ENCODE measurements at regions of chr16 and their contacts with region 1.

Region 1: GRCh38 chr16:85821441-85822135 is 22.1 kb downstream of the COX4I1 start:
- DNase-seq: peak; percentile 55 to 87 (median 72)
- ATAC-seq: peak; percentile 89
- H3K4me3 ChIP-seq: no peak overlapping the region
- H3K4me3 Mint-ChIP-seq: no peak overlapping the region
- H3K27ac ChIP-seq: no peak overlapping the region
- H3K27ac Mint-ChIP-seq: no peak overlapping the region
- H3K4me1 ChIP-seq: peaks cover 12% of the 10 kb centered on the region
- H3K4me1 Mint-ChIP-seq: peaks cover 15% of the 10 kb centered on the region
- H3K27me3 ChIP-seq: no peaks in the 10 kb centered on the region
- H3K27me3 Mint-ChIP-seq: no peaks in the 10 kb centered on the region
- CTCF ChIP-seq: peak; percentile 94

Region 2: GRCh38 chr16:85767569-85767968 is 54.0 kb before region 1 on chr16:
- CTCF ChIA-PET with region 1: no interaction called
- POLR2A ChIA-PET with region 1: no interaction called
- intact Hi-C with region 1: no loop called
- DNase-seq: no peak
- ATAC-seq: no peak
- H3K4me3 ChIP-seq: no peak overlapping the region
- H3K4me3 Mint-ChIP-seq: no peak overlapping the region
- H3K27ac ChIP-seq: no peak overlapping the region
- H3K27ac Mint-ChIP-seq: no peak overlapping the region
- H3K4me1 ChIP-seq: no peaks in the 10 kb centered on the region
- H3K4me1 Mint-ChIP-seq: no peaks in the 10 kb centered on the region
- H3K27me3 ChIP-seq: no peaks in the 10 kb centered on the region
- H3K27me3 Mint-ChIP-seq: no peaks in the 10 kb centered on the region
- CTCF ChIP-seq: no peak

Region 3: GRCh38 chr16:85799497-85800337 is 21.9 kb before region 1 on chr16 and contains the starts of genes COX4I1 and EMC8:
- CTCF ChIA-PET with region 1: interaction called, 13 read pairs
- POLR2A ChIA-PET with region 1: no interaction called
- intact Hi-C with region 1: no loop called
- DNase-seq: peak; percentile 85 to 96 (median 90)
- ATAC-seq: peak; percentile 79
- H3K4me3 ChIP-seq: peak within 1 kb of the TSS; percentile 84
- H3K4me3 Mint-ChIP-seq: peak within 1 kb of the TSS; percentile 97
- H3K27ac ChIP-seq: peak within 1 kb of the TSS; percentile 61 to 95
- H3K27ac Mint-ChIP-seq: peak within 1 kb of the TSS; percentile 99
- H3K4me1 ChIP-seq: peaks cover 40% of the 10 kb centered on the region
- H3K4me1 Mint-ChIP-seq: peaks cover 78% of the 10 kb centered on the region
- H3K27me3 ChIP-seq: no peaks in the 10 kb centered on the region
- H3K27me3 Mint-ChIP-seq: no peaks in the 10 kb centered on the region
- CTCF ChIP-seq: no peak
- total RNA-seq, gene COX4I1: 749 to 750 TPM
- total RNA-seq, gene EMC8: 38.9 to 41.7 TPM

Region 4: DNA sequence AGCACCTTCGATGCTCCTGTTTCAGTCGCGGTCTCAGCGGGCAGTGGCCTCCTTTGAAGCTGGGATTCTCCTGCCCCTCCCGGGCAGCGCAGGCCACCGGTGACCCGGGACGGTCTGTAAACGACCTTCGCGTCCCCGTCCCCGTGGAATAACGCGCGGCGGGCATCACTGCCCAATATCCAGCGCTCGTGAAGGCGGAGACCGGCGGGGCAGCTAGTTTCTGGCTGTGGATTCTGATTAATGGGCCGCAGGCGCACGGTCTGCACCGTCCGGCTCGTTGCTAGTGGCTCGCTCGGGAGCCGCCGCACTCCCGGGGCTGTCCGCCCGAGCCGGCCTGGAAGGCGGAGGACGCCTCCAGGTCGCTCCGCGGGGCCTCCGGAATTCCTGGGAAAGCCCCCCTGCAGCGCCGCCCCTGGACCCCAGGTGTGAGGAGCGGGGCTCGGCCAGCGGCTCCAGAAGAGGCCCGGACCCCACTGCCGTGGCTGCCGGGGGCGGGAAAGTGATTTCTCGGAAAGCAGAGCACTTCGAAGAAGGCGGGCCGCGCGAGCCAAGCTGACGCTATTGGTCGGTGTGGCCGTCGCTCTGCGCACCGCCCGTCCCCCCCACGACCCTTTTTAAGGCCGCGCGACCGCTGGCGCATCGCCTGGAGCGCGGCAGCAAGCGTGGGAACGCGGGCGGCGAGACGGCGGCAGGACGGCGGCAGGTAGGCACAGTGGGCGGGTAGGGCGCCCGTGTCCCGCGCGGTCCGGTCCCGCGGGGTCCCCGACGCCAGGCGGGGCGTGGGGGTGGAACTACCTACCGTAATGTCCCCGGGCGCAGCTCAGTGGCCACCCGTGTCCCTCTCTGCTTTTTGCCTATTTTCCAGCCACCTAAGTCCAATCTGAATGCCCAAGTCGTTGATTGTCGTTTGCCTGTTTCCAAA is 77.2 kb after region 1 on chr16 and contains the start of gene IRF8:
- CTCF ChIA-PET with region 1: interaction called, 4 read pairs
- POLR2A ChIA-PET with region 1: no interaction called
- intact Hi-C with region 1: loop called (anchors 5 to 10 kb)
- DNase-seq: peak; percentile 33 to 86 (median 60)
- ATAC-seq: peak; percentile 78
- H3K4me3 ChIP-seq: peak within 1 kb of the TSS; percentile 65
- H3K4me3 Mint-ChIP-seq: peak within 1 kb of the TSS; percentile 91
- H3K27ac ChIP-seq: no peak within 1 kb of the TSS
- H3K27ac Mint-ChIP-seq: no peak within 1 kb of the TSS
- H3K4me1 ChIP-seq: peaks cover 43% of the 10 kb centered on the region
- H3K4me1 Mint-ChIP-seq: peaks cover 45% of the 10 kb centered on the region
- H3K27me3 ChIP-seq: peaks cover 0 to 13% of the 10 kb centered on the region in 2 experiments
- H3K27me3 Mint-ChIP-seq: peaks cover 31% of the 10 kb centered on the region
- CTCF ChIP-seq: no peak
- total RNA-seq, gene IRF8: 11.3 to 13.2 TPM

Region 5: GRCh38 chr16:85986931-85987749 is 165.6 kb after region 1 on chr16:
- CTCF ChIA-PET with region 1: interaction called, 53 read pairs
- POLR2A ChIA-PET with region 1: interaction called, 8 read pairs
- intact Hi-C with region 1: loop called (anchors 1 kb)
- DNase-seq: peak in 13 of 14 experiments; percentile 18 to 66 (median 30)
- ATAC-seq: no peak
- H3K4me3 ChIP-seq: no peak overlapping the region
- H3K4me3 Mint-ChIP-seq: no peak overlapping the region
- H3K27ac ChIP-seq: no peak overlapping the region
- H3K27ac Mint-ChIP-seq: no peak overlapping the region
- H3K4me1 ChIP-seq: peaks cover 24% of the 10 kb centered on the region
- H3K4me1 Mint-ChIP-seq: peaks cover 12% of the 10 kb centered on the region
- H3K27me3 ChIP-seq: peaks cover 0 to 2% of the 10 kb centered on the region in 2 experiments
- H3K27me3 Mint-ChIP-seq: peaks cover 22% of the 10 kb centered on the region
- CTCF ChIP-seq: peak; percentile 78

Region 6: DNA sequence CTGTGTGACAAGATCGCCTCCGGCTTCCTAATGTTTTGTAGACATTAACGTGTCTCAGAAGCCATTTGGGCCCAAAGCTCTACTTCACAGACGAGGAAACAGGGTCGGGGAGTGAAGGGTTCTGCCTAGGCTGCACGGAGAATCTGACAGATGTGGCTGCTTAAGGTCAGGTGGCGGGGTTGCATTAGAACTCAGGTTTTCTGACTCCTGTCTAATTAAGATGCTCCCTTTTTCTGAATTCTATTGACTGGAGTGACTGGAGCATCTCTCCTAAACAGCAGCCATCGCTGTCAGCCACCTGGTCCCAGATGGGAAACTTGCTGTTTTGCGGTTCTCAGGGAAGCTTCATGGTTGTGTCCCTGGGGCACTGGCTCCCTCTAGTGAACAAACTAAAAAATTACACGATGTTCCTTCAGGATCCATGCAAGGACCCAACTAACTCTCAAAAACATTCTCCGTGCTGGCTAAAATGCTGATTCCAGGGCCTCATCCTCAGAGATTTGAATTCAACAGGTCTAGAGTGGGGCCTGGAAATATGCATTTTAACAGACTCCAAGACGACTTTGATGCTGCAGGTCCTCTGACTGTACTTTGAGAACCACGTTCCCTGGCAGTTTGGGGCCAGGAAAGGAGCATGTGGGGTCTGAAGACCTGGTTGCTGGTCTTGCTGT is 194.7 kb after region 1 on chr16:
- CTCF ChIA-PET with region 1: interaction called, 43 read pairs
- POLR2A ChIA-PET with region 1: interaction called, 8 read pairs
- intact Hi-C with region 1: loop called (anchors 1 kb)
- DNase-seq: peak in 10 of 14 experiments; percentile 5 to 74 (median 15)
- ATAC-seq: no peak
- H3K4me3 ChIP-seq: no peak overlapping the region
- H3K4me3 Mint-ChIP-seq: no peak overlapping the region
- H3K27ac ChIP-seq: no peak overlapping the region
- H3K27ac Mint-ChIP-seq: no peak overlapping the region
- H3K4me1 ChIP-seq: peaks cover 4% of the 10 kb centered on the region
- H3K4me1 Mint-ChIP-seq: no peaks in the 10 kb centered on the region
- H3K27me3 ChIP-seq: peaks cover 5 to 20% of the 10 kb centered on the region in 2 experiments
- H3K27me3 Mint-ChIP-seq: peaks cover 47% of the 10 kb centered on the region
- CTCF ChIP-seq: peak; percentile 86

Region 7: DNA sequence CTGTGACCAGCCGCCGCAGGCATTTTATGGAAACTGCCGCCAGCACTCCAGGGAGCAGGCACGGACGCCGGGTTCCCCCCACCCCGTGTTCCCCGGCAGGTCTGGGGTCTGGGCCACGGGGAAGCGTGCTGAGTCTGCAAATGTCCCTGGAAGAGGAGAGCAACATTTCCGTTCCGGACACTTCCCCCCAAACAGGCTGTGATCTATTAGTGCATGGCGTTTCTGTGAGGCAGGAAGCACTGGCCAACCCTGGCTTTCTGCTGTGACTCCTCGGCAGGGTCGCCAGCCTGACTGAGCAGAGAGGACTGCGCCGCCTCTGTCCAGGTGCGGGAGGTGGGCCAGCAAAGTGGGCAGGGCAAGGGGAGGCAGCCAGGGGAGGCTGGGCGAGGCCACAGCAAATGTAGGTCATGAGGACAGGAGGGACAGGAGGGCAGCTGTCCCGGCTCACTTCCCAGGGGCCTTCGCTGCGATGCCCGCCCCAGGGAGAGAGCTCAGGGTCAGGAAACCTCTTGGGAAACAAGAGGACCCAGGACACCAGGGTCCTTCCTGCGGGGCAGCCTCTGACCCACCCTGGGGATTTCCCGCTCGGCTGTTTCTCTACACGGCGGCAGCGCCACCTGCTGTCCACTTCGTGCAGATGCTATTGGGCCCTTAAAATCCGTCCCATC is 698.2 kb after region 1 on chr16:
- CTCF ChIA-PET with region 1: no interaction called
- POLR2A ChIA-PET with region 1: no interaction called
- intact Hi-C with region 1: loop called (anchors 1 to 10 kb)
- DNase-seq: peak; percentile 22 to 79 (median 38)
- ATAC-seq: peak; percentile 59
- H3K4me3 ChIP-seq: peak overlapping the region; percentile 27
- H3K4me3 Mint-ChIP-seq: no peak overlapping the region
- H3K27ac ChIP-seq: no peak overlapping the region
- H3K27ac Mint-ChIP-seq: no peak overlapping the region
- H3K4me1 ChIP-seq: peaks cover 13% of the 10 kb centered on the region
- H3K4me1 Mint-ChIP-seq: peaks cover 10% of the 10 kb centered on the region
- H3K27me3 ChIP-seq: peaks cover 52 to 64% of the 10 kb centered on the region in 2 experiments
- H3K27me3 Mint-ChIP-seq: peaks cover 54% of the 10 kb centered on the region
- CTCF ChIP-seq: peak; percentile 93